ENCODE measurements at regions of chr14 and their contacts with region 1.

Region 1: GRCh38 chr14:87852107-87852506 is 140.9 kb downstream of the GALC start:
- H3K4me3 ChIP-seq: no peak overlapping the region
- H3K27ac ChIP-seq: no peak overlapping the region
- H3K4me1 ChIP-seq: no peaks in the 10 kb centered on the region
- CTCF ChIP-seq: no peak

Region 2: GRCh38 chr14:87712396-87713090 is 139.6 kb before region 1 on chr14:
- CTCF ChIA-PET with region 1: no interaction called
- POLR2A ChIA-PET with region 1: no interaction called
- H3K4me3 ChIP-seq: no peak overlapping the region
- H3K27ac ChIP-seq: no peak overlapping the region
- H3K4me1 ChIP-seq: no peaks in the 10 kb centered on the region
- CTCF ChIP-seq: no peak

Region 3: GRCh38 chr14:87785897-87786296 is 66.2 kb before region 1 on chr14:
- CTCF ChIA-PET with region 1: no interaction called
- POLR2A ChIA-PET with region 1: no interaction called
- H3K4me3 ChIP-seq: no peak overlapping the region
- H3K27ac ChIP-seq: no peak overlapping the region
- H3K4me1 ChIP-seq: no peaks in the 10 kb centered on the region
- CTCF ChIP-seq: no peak

Region 4: DNA sequence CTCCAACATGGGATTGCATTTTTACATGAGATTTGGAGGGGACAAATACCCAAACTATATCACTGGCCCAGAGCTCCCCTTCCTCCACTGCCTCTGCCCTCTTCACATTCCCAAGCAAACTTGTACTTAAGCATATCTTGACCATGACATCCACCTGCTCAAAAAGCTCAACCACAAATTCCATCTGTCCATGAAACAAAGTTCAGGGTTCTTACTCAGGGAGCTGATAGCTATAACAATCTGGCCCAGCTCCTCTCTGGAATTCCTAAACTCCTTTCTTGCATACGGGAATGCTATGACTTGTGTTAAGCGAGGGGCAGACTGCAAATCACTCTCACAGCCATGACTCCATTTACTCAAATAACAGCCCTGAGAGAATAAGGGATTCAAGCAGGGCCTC is 11.2 kb before region 1 on chr14:
- CTCF ChIA-PET with region 1: interaction called, 3 read pairs
- POLR2A ChIA-PET with region 1: interaction called, 16 read pairs
- H3K4me3 ChIP-seq: no peak overlapping the region
- H3K27ac ChIP-seq: no peak overlapping the region
- H3K4me1 ChIP-seq: no peaks in the 10 kb centered on the region
- CTCF ChIP-seq: no peak

Region 5: DNA sequence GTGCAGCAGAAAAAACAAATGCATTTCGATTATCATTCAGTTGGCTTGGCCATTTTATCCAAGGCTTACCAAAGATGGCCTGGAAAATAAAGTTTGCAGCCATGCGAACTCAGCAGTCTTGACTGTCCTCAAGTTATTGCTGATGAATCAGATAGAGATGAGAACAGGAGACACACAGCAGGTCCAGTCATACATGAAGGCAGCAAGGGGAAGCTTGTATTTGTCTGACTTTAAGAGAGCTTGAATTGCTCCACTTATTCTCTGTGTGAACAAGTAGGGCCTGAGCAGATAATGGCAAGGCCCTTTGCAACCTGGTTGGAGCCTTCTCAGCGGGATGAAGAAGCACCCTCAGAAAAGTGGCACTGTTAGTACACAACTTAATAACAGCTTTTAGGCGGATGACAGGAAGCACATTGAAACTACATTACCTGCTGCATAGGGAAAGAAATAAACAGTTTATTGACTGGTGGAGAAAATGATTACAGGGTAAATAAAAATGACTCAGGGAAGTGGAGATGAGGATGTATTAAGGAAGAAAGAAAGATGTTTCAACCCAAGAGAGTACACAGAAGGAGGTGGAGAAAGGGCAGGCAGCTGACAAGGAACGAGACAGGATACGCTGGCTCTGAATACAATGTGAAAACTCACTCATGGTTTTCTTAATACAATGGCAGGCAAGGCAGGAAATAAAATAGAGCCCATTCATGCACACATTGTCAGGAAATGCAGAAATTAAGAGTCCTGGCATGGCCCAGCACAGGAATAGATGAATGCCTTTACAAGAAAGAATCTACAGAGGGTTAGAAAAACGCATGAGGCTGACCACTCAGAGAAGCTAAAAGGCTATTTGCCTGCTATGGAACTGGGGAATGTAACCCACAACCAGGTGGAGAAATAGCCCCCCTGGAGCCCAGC is 12.5 kb after region 1 on chr14:
- CTCF ChIA-PET with region 1: no interaction called
- POLR2A ChIA-PET with region 1: no interaction called
- H3K4me3 ChIP-seq: no peak overlapping the region
- H3K27ac ChIP-seq: no peak overlapping the region
- H3K4me1 ChIP-seq: no peaks in the 10 kb centered on the region
- CTCF ChIP-seq: no peak

Region 6: GRCh38 chr14:88106377-88106776 is 254.3 kb after region 1 on chr14:
- CTCF ChIA-PET with region 1: no interaction called
- POLR2A ChIA-PET with region 1: no interaction called
- H3K4me3 ChIP-seq: no peak overlapping the region
- H3K27ac ChIP-seq: no peak overlapping the region
- H3K4me1 ChIP-seq: no peaks in the 10 kb centered on the region
- CTCF ChIP-seq: no peak

Measured in HEK293 (cell line).